Endothelial cell of umbilical vein (primary cell): ENCODE measurements at regions of chr6 and their contacts with region 1.

Region 1: DNA sequence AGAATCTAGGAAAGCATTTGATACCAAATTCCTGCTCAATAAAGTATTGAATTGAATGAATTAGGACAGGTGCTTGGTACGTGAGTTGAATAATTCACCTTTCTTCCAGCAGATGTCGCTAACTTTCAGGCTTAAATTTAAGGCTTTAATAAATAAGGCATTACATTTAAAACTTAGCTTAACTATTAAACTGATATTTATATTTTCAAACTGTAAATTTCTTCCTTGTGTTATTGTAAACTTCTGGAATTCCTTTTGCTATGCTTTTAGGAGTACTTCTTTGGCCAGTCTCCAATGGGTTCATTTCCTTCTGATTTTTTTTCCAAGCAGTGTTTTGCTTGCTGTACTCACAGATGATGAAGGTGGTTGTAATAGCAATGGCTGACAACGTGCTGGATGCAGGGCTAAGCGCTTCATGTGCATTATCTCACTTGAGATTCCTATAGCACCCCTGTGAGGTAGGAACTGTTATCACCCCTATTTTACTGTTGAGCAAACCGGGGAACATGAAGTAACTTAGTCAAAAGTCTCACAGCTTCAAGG is 71.3 kb upstream of the SLC2A12 start:
- DNase-seq: peak; percentile 76
- H3K4me3 ChIP-seq: no peak overlapping the region
- H3K27ac ChIP-seq: no peak overlapping the region
- H3K4me1 ChIP-seq: no peaks in the 10 kb centered on the region
- H3K27me3 ChIP-seq: no peaks in the 10 kb centered on the region
- CTCF ChIP-seq: peak; percentile 38 to 42
- POLR2A ChIP-seq: no peak

Region 2: GRCh38 chr6:134138226-134138975 is 14.7 kb after region 1 on chr6:
- CTCF ChIA-PET with region 1: interaction called, 29 read pairs
- POLR2A ChIA-PET with region 1: no interaction called
- dilution Hi-C with region 1: no loop called
- intact Hi-C with region 1: no loop called
- DNase-seq: no peak
- H3K4me3 ChIP-seq: no peak overlapping the region
- H3K27ac ChIP-seq: no peak overlapping the region
- H3K4me1 ChIP-seq: no peaks in the 10 kb centered on the region
- H3K27me3 ChIP-seq: peaks cover 0 to 2% of the 10 kb centered on the region in 2 experiments
- CTCF ChIP-seq: no peak
- POLR2A ChIP-seq: no peak

Region 3: GRCh38 chr6:134161036-134161435 is 37.3 kb after region 1 on chr6:
- CTCF ChIA-PET with region 1: interaction called, 18 read pairs
- POLR2A ChIA-PET with region 1: no interaction called
- dilution Hi-C with region 1: no loop called
- intact Hi-C with region 1: loop called (anchors 2 kb)
- DNase-seq: no peak
- H3K4me3 ChIP-seq: no peak overlapping the region
- H3K27ac ChIP-seq: no peak overlapping the region
- H3K4me1 ChIP-seq: no peaks in the 10 kb centered on the region
- H3K27me3 ChIP-seq: no peaks in the 10 kb centered on the region
- CTCF ChIP-seq: no peak
- POLR2A ChIP-seq: no peak

Region 4: DNA sequence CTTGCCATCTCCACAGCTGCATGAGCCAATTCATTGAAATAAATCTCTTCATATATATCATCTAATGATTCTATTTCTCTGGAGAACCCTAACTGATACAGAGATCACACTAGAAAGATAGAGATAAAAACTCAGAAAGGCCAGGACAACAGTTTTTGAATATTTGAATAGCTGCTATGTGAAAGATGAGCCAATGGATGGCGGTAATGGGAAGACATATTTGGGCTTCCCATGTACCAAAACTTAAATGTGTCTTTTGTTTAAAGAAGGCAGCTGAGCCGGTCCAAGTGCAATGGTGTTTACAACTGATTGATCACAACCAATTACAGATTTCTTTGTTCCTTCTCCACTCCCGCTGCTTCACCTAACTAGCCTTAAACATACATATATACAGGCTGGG is 159.1 kb after region 1 on chr6:
- CTCF ChIA-PET with region 1: no interaction called
- POLR2A ChIA-PET with region 1: no interaction called
- dilution Hi-C with region 1: no loop called
- intact Hi-C with region 1: no loop called
- DNase-seq: no peak
- H3K4me3 ChIP-seq: no peak overlapping the region
- H3K27ac ChIP-seq: no peak overlapping the region
- H3K4me1 ChIP-seq: peaks cover 6% of the 10 kb centered on the region
- H3K27me3 ChIP-seq: no peaks in the 10 kb centered on the region
- CTCF ChIP-seq: no peak
- POLR2A ChIP-seq: no peak

Region 5: GRCh38 chr6:134389129-134389528 is 265.4 kb after region 1 on chr6:
- CTCF ChIA-PET with region 1: no interaction called
- POLR2A ChIA-PET with region 1: no interaction called
- dilution Hi-C with region 1: no loop called
- intact Hi-C with region 1: no loop called
- DNase-seq: no peak
- H3K4me3 ChIP-seq: no peak overlapping the region
- H3K27ac ChIP-seq: no peak overlapping the region
- H3K4me1 ChIP-seq: no peaks in the 10 kb centered on the region
- H3K27me3 ChIP-seq: no peaks in the 10 kb centered on the region
- CTCF ChIP-seq: no peak
- POLR2A ChIP-seq: no peak

Region 6: GRCh38 chr6:134888316-134888715 is 764.6 kb after region 1 on chr6:
- CTCF ChIA-PET with region 1: interaction called, 85 read pairs
- POLR2A ChIA-PET with region 1: no interaction called
- dilution Hi-C with region 1: no loop called
- intact Hi-C with region 1: no loop called
- DNase-seq: no peak
- H3K4me3 ChIP-seq: no peak overlapping the region
- H3K27ac ChIP-seq: no peak overlapping the region
- H3K4me1 ChIP-seq: peaks cover 3% of the 10 kb centered on the region
- H3K27me3 ChIP-seq: no peaks in the 10 kb centered on the region
- CTCF ChIP-seq: no peak
- POLR2A ChIP-seq: no peak

Region 7: GRCh38 chr6:135438907-135439535 is 1315.3 kb after region 1 on chr6:
- CTCF ChIA-PET with region 1: interaction called, 4 read pairs
- POLR2A ChIA-PET with region 1: no interaction called
- dilution Hi-C with region 1: no loop called
- intact Hi-C with region 1: loop called (anchors 5 kb)
- DNase-seq: peak; percentile 55
- H3K4me3 ChIP-seq: no peak overlapping the region
- H3K27ac ChIP-seq: peak overlapping the region; percentile 23
- H3K4me1 ChIP-seq: peaks cover 7% of the 10 kb centered on the region
- H3K27me3 ChIP-seq: no peaks in the 10 kb centered on the region
- CTCF ChIP-seq: peak; percentile 22 to 38
- POLR2A ChIP-seq: no peak